B cell (primary cell): ENCODE measurements at regions of chr14 and their contacts with region 1.

Region 1: DNA sequence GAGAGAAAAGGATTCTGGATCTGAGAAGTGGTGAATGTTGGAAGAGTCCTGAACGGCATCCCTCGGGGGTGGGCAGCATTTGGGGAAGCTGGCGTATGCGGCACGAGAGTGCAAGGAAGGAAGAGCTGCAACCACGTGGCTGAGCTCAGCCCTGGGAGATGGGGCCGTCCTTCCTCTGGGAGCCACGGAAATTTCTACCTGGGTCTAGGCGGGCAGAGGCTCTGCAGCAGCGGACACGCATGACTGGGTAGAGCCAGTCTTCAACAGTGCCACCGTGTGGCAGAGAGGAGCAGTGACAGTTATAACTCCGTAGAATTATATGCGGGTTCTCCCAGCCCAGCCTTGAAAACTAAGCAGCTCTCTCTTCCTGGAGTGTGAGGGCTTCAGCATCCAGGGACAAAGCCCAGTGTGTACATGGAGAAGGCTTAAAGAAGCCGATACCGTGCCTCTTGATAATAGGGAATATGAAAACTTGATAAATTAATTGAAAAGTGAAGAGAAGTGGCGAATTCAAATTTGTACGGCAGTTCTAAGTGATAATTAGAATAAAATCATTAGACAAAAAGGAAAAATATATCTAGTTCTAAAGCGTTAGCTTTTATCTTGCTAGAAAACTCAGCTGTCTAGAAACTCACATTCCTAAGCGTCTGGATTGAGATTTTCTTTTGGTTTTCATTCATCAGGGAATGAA is 82.9 kb upstream of the STXBP6 start:
- DNase-seq: peak; percentile 68
- ATAC-seq: peak; percentile 81
- H3K4me3 ChIP-seq: no peak overlapping the region
- H3K4me3 Mint-ChIP-seq: no peak overlapping the region
- H3K27ac ChIP-seq: no peak overlapping the region
- H3K27ac Mint-ChIP-seq: no peak overlapping the region
- H3K4me1 ChIP-seq: peaks cover 0 to 6% of the 10 kb centered on the region in 2 donors
- H3K4me1 Mint-ChIP-seq: peaks cover 3% of the 10 kb centered on the region
- H3K27me3 ChIP-seq: peaks cover 0 to 11% (median 3%) of the 10 kb centered on the region in 4 experiments
- H3K27me3 Mint-ChIP-seq: peaks cover 52% of the 10 kb centered on the region
- CTCF ChIP-seq: peak; percentile 80

Region 2: DNA sequence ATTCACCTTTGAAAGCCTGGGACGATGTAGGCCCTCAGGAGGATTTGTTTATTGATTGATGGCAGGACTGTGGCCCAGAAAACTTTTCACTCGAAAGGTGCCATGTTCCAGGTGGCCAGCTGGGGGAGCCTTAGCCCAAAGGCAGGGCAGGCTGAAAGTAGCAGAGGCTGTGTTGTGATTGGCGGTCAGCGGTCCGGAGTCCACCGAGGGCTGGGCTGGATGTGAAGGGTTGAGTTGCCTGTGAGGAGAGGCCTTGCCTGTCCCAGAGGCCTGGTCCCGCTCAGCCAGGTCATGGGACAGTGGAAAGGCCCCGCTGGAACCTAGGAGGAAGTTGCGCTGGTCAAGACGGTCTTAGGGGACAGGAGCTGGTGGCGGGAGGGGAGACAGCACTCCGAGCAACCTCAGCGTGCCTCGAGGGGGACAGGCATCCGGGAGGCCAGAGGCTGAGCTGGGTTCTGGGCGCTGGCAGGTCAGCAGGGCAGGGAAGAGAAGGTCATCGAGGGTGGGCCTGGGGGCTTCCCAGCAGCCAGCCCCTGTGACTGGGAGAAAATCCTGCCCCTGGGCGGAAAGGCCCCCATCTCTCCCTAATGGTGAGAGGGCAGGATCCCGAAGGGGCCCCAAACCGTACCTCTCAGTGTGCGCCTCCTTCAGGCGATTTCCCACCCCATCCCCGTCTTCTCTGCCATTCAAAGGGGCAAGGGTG is 651.1 kb before region 1 on chr14:
- CTCF ChIA-PET with region 1: no interaction called
- POLR2A ChIA-PET with region 1: no interaction called
- intact Hi-C with region 1: loop called (anchors 5 kb)
- DNase-seq: peak; percentile 47
- ATAC-seq: peak; percentile 82
- H3K4me3 ChIP-seq: peak overlapping the region in 2 of 5 experiments; percentile 29 to 32
- H3K4me3 Mint-ChIP-seq: peak overlapping the region; percentile 89
- H3K27ac ChIP-seq: no peak overlapping the region
- H3K27ac Mint-ChIP-seq: peak overlapping the region; percentile 47
- H3K4me1 ChIP-seq: peaks cover 9 to 10% of the 10 kb centered on the region in 2 donors
- H3K4me1 Mint-ChIP-seq: peaks cover 17% of the 10 kb centered on the region
- H3K27me3 ChIP-seq: no peaks in the 10 kb centered on the region
- H3K27me3 Mint-ChIP-seq: peaks cover 3% of the 10 kb centered on the region
- CTCF ChIP-seq: peak; percentile 70

Region 3: GRCh38 chr14:24690492-24690891 is 442.4 kb before region 1 on chr14:
- CTCF ChIA-PET with region 1: interaction called, 15 read pairs
- POLR2A ChIA-PET with region 1: no interaction called
- intact Hi-C with region 1: no loop called
- DNase-seq: peak; percentile 39
- ATAC-seq: peak; percentile 39
- H3K4me3 ChIP-seq: no peak overlapping the region
- H3K4me3 Mint-ChIP-seq: no peak overlapping the region
- H3K27ac ChIP-seq: no peak overlapping the region
- H3K27ac Mint-ChIP-seq: no peak overlapping the region
- H3K4me1 ChIP-seq: peaks cover 10% of the 10 kb centered on the region in 2 donors
- H3K4me1 Mint-ChIP-seq: peaks cover 5% of the 10 kb centered on the region
- H3K27me3 ChIP-seq: no peaks in the 10 kb centered on the region
- H3K27me3 Mint-ChIP-seq: peaks cover 8% of the 10 kb centered on the region
- CTCF ChIP-seq: peak; percentile 22

Region 4: DNA sequence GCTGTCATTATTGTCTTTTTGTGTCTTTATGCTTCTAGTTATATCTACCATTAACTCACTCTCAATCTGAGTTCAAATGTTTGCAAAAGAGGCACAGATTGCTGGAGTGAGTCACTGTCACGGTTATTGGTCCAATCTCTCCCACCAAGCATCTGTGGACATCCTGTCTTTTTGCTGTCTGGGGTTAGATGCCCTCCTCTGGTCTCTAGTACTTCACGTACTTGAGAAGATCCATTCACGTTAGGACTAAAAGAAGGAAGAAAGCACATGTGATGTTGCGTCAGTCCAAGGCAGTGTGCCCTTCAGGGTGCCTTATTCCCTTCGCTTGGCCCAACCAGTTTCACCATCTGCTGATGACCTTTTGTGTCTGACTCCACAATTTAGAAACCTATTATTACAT is 10.7 kb before region 1 on chr14:
- CTCF ChIA-PET with region 1: interaction called, 11 read pairs
- POLR2A ChIA-PET with region 1: no interaction called
- intact Hi-C with region 1: no loop called
- DNase-seq: no peak
- ATAC-seq: no peak
- H3K4me3 ChIP-seq: no peak overlapping the region
- H3K4me3 Mint-ChIP-seq: no peak overlapping the region
- H3K27ac ChIP-seq: no peak overlapping the region
- H3K27ac Mint-ChIP-seq: no peak overlapping the region
- H3K4me1 ChIP-seq: no peaks in the 10 kb centered on the region
- H3K4me1 Mint-ChIP-seq: no peaks in the 10 kb centered on the region
- H3K27me3 ChIP-seq: peaks cover 0 to 2% (median 0%) of the 10 kb centered on the region in 4 experiments
- H3K27me3 Mint-ChIP-seq: peaks cover 8% of the 10 kb centered on the region
- CTCF ChIP-seq: no peak